AG04449 (cell line): ENCODE measurements at regions of chr17 and their contacts with region 1.

Region 1: GRCh38 chr17:63611354-63611753 is 10.7 kb downstream of the TACO1 start:
- DNase-seq: no peak
- H3K4me3 ChIP-seq: no peak overlapping the region
- CTCF ChIP-seq: no peak

Region 2: DNA sequence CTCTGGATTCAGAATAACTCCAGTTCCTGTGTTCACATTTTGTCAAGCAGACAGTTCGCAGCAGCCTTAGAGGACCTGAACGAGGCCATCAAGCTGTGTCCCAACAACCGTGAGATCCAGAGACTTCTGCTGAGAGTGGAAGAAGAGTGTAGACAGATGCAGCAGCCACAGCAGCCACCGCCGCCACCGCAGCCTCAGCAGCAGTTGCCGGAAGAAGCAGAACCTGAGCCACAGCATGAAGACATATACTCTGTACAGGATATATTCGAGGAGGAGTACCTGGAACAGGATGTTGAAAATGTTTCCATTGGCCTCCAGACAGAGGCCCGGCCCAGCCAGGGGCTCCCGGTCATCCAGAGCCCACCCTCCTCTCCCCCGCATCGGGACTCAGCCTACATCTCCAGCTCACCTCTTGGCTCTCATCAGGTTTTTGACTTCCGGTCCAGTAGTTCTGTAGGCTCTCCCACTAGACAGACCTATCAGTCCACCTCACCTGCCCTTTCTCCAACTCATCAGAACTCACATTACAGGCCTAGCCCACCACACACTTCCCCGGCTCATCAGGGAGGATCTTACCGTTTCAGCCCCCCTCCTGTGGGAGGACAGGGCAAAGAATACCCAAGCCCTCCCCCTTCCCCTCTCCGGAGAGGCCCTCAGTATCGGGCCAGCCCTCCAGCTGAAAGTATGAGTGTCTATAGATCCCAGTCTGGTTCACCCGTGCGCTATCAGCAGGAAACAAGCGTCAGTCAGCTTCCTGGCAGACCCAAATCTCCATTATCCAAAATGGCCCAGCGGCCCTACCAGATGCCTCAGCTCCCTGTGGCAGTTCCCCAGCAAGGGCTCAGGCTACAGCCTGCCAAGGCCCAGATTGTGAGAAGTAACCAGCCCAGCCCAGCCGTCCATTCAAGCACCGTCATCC is 191.1 kb before region 1 on chr17:
- CTCF ChIA-PET with region 1: interaction called, 398 read pairs
- POLR2A ChIA-PET with region 1: no interaction called
- DNase-seq: no peak
- H3K4me3 ChIP-seq: no peak overlapping the region
- CTCF ChIP-seq: no peak

Region 3: GRCh38 chr17:63445979-63446691 is 165.2 kb before region 1 on chr17 and contains the start of gene CYB561:
- CTCF ChIA-PET with region 1: interaction called, 10 read pairs
- POLR2A ChIA-PET with region 1: no interaction called
- DNase-seq: no peak
- H3K4me3 ChIP-seq: peak within 1 kb of the TSS; percentile 50
- CTCF ChIP-seq: peak; percentile 66

Region 4: DNA sequence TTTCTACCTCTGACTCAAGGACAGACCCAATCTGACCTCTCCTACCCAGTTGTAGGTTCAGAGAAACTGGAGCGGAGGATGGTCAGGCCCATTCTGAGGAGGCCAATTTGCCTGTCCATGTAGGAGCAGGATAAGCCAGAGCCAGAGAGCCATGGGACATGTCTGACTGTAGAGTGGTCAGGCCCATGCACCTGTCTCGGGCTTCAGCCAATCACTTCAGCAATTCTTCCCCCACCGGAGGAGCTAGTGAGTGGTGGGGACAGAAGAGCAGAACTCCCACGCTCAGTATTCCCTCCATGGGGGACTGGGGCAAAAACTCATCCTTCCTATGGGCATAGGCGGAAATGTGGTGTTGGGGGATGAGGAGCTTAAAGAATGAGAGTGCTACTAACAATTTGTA is 46.8 kb before region 1 on chr17:
- CTCF ChIA-PET with region 1: interaction called, 14 read pairs
- POLR2A ChIA-PET with region 1: no interaction called
- DNase-seq: no peak
- H3K4me3 ChIP-seq: no peak overlapping the region
- CTCF ChIP-seq: no peak

Region 5: DNA sequence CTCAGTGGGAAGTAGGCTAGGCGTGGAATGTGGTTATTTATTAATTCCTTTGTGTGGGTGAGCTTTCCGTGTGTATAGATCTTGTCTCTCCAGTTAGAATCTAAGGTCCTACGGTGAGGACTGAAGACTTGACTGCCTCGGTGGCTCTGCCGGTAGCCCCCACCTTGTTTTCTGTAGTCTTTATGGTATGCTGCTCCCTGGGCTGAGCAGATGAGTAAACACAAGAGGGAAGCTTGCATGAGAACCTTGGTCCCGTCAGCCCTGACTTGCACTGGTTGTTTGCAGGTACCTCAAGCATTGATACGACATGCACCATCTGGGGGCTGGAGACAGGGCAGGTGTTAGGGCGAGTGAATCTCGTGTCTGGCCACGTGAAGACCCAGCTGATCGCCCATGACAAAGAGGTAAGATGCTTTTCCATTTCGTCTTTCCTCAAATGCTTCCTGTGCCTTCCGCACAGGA is 31.8 kb before region 1 on chr17:
- CTCF ChIA-PET with region 1: interaction called, 30 read pairs
- POLR2A ChIA-PET with region 1: no interaction called
- DNase-seq: no peak
- H3K4me3 ChIP-seq: no peak overlapping the region
- CTCF ChIP-seq: no peak

Region 6: DNA sequence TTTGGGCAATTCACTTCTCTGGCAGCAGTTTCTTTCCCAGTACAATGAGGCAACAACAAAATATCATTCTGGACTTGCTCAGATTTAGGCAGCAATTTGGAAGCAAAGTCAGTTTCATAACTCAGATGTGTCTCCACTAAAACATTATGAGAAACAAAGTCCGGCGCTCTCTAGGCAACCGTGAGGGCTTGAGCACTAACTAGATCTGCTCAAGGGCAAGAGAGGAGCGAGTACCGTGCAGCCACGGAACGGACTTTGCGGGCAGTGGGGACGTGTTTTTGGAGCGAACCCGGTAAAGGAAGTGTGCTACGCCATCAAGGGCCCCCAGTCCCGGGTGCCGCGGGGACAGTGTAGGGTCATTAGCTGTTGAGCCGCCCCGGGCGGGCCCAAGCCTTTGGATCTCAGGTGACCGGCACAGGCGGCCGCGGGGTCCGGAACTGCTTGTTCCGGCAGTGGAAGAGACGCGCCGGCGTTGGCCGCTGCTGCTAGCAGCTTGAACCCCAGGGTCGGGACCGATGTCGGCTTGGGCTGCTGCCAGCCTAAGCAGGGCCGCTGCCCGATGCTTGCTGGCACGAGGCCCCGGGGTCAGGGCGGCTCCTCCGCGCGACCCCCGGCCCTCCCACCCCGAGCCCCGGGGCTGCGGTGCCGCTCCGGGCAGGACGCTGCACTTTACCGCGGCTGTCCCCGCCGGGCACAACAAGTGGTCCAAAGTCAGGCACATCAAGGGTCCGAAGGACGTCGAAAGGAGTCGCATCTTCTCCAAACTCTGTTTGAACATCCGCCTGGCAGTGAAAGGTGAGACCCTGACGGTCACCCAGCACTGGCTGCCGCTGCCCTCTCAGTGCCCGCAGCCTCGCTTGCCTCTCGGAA is 10.6 kb before region 1 on chr17 and contains the start of gene TACO1:
- CTCF ChIA-PET with region 1: interaction called, 74 read pairs
- POLR2A ChIA-PET with region 1: no interaction called
- DNase-seq: peak; percentile 26
- H3K4me3 ChIP-seq: peak within 1 kb of the TSS; percentile 89
- CTCF ChIP-seq: no peak

Region 7: GRCh38 chr17:63634163-63634562 is 22.8 kb after region 1 on chr17:
- CTCF ChIA-PET with region 1: interaction called, 18 read pairs
- POLR2A ChIA-PET with region 1: no interaction called
- DNase-seq: no peak
- H3K4me3 ChIP-seq: no peak overlapping the region
- CTCF ChIP-seq: no peak

Region 8: DNA sequence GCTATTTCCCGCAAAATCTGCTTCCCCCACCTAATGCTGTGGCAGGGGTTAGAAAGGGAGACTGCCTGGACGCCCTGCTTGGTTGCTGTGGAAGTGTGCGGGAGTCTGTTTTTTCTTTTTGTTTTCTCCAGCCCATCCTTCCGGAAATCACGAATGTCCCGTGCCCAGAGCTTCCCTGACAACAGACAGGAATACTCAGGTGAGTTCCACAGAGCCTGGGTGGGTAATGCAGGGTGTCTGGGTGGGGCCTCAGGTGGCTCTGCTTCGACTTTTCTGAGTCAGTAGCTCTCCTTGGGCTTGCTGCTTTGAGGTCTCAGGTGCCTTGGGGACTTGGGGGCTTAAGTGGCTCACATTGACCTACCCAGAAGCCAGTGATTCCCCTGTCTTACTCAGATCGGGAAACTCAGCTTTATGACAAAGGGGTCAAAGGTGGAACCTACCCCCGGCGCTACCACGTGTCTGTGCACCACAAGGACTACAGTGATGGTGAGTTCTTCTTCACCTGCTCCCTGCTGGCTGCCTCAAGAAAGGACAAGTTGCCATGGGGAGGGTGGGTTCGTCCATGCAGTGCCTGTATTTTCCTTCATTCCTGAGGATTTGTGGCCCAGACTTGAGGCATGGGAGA is 77.2 kb after region 1 on chr17:
- CTCF ChIA-PET with region 1: no interaction called
- POLR2A ChIA-PET with region 1: no interaction called
- DNase-seq: no peak
- H3K4me3 ChIP-seq: no peak overlapping the region
- CTCF ChIP-seq: no peak

Region 9: DNA sequence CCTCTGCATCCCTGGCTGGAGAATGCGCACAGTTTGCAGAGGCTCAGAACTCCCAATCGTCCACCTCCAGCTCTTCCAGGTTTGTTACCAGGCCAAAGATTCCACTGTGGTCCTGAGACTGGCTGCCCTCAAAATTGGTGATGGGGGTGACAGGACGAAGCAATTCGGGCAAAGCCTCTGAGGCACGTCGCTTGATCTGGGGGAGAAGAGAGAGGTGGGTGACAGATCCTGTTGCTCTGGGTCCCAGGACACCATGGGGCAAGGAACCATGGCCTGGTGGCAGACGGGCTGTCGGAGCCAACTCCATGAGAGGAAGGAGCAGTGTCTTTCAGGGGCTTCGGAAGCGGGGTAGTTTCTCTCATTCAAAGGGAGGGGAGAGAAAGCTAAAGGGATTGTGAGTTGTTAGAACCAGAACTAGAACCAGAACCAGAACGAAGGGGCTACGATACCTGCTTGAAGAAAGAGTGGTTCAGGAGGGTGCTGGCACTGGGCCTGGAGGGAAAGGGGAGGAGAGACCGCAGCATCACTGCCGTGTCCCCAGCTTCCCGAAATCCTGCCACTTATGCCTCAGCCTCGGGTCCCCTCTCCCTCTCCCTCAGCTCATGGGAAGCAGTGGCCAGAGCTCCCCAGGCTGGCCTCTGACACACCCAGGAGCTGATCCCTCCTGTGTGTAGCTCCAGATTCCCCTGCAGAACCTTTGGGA is 92.4 kb after region 1 on chr17:
- CTCF ChIA-PET with region 1: no interaction called
- POLR2A ChIA-PET with region 1: no interaction called
- DNase-seq: no peak
- H3K4me3 ChIP-seq: no peak overlapping the region
- CTCF ChIP-seq: no peak